Natural killer cell (primary cell): ENCODE measurements at regions of chr9 and their contacts with region 1.

Region 1: GRCh38 chr9:96020792-96021550 is 145.5 kb downstream of the ERCC6L2 start:
- DNase-seq: peak; percentile 64 to 74
- ATAC-seq: peak; percentile 62 to 75 (median 68)
- H3K4me3 ChIP-seq: peak overlapping the region; percentile 56
- H3K4me3 Mint-ChIP-seq: peak overlapping the region; percentile 93
- H3K27ac ChIP-seq: peak overlapping the region; percentile 95
- H3K27ac Mint-ChIP-seq: peak overlapping the region; percentile 91 to 99
- H3K4me1 ChIP-seq: peaks cover 47% of the 10 kb centered on the region
- H3K4me1 Mint-ChIP-seq: peaks cover 76 to 86% of the 10 kb centered on the region in 2 donors
- H3K27me3 ChIP-seq: no peaks in the 10 kb centered on the region
- H3K27me3 Mint-ChIP-seq: no peaks in the 10 kb centered on the region
- CTCF ChIP-seq: no peak

Region 2: DNA sequence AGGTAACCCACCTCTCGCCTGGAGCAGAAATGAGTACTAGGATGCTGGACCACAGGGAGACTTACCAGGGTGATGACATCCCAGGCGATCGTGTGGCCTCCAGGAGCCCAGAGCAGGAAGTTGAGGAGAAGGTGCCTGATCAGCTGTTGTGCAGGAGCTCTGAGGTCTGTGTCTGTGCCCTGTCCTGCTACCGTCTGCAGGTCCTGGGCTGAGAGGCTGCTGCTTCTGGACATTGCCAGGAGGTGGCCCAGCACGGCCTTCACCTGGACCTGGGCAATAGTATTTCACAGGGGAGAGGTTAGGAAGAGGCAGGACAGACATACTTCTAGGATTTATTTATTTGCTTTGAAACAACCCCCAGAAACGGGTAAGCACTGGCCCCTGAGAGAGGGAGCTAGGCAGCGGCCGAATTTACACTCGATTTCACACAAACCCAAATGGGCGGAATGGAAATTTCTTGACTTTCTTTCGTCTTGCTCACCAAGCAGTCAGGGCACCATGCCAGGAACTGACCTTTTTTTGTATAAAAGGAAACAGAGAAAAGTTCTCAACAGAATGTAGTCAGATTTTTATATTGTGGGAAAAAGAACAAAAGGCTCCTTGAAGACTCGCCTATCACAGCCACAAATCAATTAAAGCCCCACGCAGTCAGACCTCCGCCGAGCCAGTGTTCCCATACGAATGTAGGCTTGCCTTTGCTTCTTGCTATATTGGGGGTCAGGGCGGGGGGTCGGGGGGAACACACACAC is 913.8 kb before region 1 on chr9:
- intact Hi-C with region 1: no loop called
- DNase-seq: no peak
- ATAC-seq: no peak
- H3K4me3 ChIP-seq: no peak overlapping the region
- H3K4me3 Mint-ChIP-seq: no peak overlapping the region
- H3K27ac ChIP-seq: no peak overlapping the region
- H3K27ac Mint-ChIP-seq: no peak overlapping the region
- H3K4me1 ChIP-seq: no peaks in the 10 kb centered on the region
- H3K4me1 Mint-ChIP-seq: no peaks in the 10 kb centered on the region
- H3K27me3 ChIP-seq: no peaks in the 10 kb centered on the region
- H3K27me3 Mint-ChIP-seq: no peaks in the 10 kb centered on the region
- CTCF ChIP-seq: no peak

Region 3: GRCh38 chr9:95875305-95876137 is 145.4 kb before region 1 on chr9 and contains the start of gene ERCC6L2:
- intact Hi-C with region 1: loop called (anchors 2 kb)
- DNase-seq: peak; percentile 92 to 97
- ATAC-seq: peak; percentile 85 to 93 (median 89)
- H3K4me3 ChIP-seq: peak within 1 kb of the TSS; percentile 95
- H3K4me3 Mint-ChIP-seq: no peak within 1 kb of the TSS
- H3K27ac ChIP-seq: no peak within 1 kb of the TSS
- H3K27ac Mint-ChIP-seq: no peak within 1 kb of the TSS
- H3K4me1 ChIP-seq: peaks cover 20% of the 10 kb centered on the region
- H3K4me1 Mint-ChIP-seq: peaks cover 9 to 16% of the 10 kb centered on the region in 2 donors
- H3K27me3 ChIP-seq: no peaks in the 10 kb centered on the region
- H3K27me3 Mint-ChIP-seq: no peaks in the 10 kb centered on the region
- CTCF ChIP-seq: no peak
- total RNA-seq, gene ERCC6L2: 37.1 to 45.8 (median 38.6) TPM

Region 4: GRCh38 chr9:95954940-95955339 is 66.0 kb before region 1 on chr9:
- intact Hi-C with region 1: no loop called
- DNase-seq: no peak
- ATAC-seq: no peak
- H3K4me3 ChIP-seq: no peak overlapping the region
- H3K4me3 Mint-ChIP-seq: no peak overlapping the region
- H3K27ac ChIP-seq: no peak overlapping the region
- H3K27ac Mint-ChIP-seq: no peak overlapping the region
- H3K4me1 ChIP-seq: no peaks in the 10 kb centered on the region
- H3K4me1 Mint-ChIP-seq: peaks cover 7 to 25% of the 10 kb centered on the region in 2 donors
- H3K27me3 ChIP-seq: no peaks in the 10 kb centered on the region
- H3K27me3 Mint-ChIP-seq: no peaks in the 10 kb centered on the region
- CTCF ChIP-seq: no peak

Region 5: GRCh38 chr9:95989297-95989696 is 31.7 kb before region 1 on chr9:
- intact Hi-C with region 1: no loop called
- DNase-seq: no peak
- ATAC-seq: no peak
- H3K4me3 ChIP-seq: no peak overlapping the region
- H3K4me3 Mint-ChIP-seq: no peak overlapping the region
- H3K27ac ChIP-seq: no peak overlapping the region
- H3K27ac Mint-ChIP-seq: no peak overlapping the region
- H3K4me1 ChIP-seq: no peaks in the 10 kb centered on the region
- H3K4me1 Mint-ChIP-seq: peaks cover 0 to 5% of the 10 kb centered on the region in 2 donors
- H3K27me3 ChIP-seq: no peaks in the 10 kb centered on the region
- H3K27me3 Mint-ChIP-seq: no peaks in the 10 kb centered on the region
- CTCF ChIP-seq: no peak

Region 6: DNA sequence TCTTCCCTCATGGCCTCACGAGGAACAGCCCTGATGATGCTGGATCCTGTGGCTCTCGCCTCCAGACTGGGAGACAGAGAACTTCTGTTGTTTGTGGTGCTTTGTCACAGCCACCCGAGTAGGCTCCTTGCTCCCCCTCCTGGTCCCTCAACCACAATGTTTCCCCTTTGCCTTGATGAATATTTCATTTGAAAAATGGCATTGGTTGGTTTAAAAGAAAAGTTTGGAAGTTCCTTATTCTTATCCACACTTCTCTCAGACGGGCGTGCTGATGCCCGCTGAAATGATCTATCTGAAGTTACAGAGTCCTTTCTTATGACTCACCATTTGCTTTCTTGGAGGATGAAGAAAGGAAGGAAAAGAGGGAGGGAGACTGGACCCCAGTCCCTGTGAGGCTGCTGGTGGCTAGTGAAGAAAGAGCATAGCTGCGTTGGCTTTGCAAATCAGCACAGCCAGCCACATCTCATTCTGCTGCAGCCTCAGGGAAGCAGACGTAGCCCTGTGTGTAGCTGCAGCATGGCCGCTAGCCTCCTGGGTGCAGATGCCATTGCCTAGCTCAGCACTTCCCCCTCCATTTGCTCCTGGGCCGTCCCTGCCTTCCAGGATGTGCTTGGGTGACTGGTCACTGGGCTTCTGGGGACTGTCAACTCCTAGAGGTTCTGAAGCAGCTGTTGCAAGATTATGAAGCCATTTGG is 40.5 kb after region 1 on chr9:
- intact Hi-C with region 1: loop called (anchors 5 kb)
- DNase-seq: peak; percentile 33 to 64
- ATAC-seq: peak; percentile 38 to 72 (median 43)
- H3K4me3 ChIP-seq: no peak overlapping the region
- H3K4me3 Mint-ChIP-seq: no peak overlapping the region
- H3K27ac ChIP-seq: no peak overlapping the region
- H3K27ac Mint-ChIP-seq: no peak overlapping the region
- H3K4me1 ChIP-seq: peaks cover 9% of the 10 kb centered on the region
- H3K4me1 Mint-ChIP-seq: peaks cover 22 to 27% of the 10 kb centered on the region in 2 donors
- H3K27me3 ChIP-seq: no peaks in the 10 kb centered on the region
- H3K27me3 Mint-ChIP-seq: peaks cover 6 to 12% of the 10 kb centered on the region in 2 donors
- CTCF ChIP-seq: peak; percentile 54

Region 7: GRCh38 chr9:96150324-96151227 is 129.6 kb after region 1 on chr9:
- intact Hi-C with region 1: loop called (anchors 5 kb)
- DNase-seq: peak; percentile 47 to 67
- ATAC-seq: peak; percentile 84 to 90 (median 86)
- H3K4me3 ChIP-seq: no peak overlapping the region
- H3K4me3 Mint-ChIP-seq: peak overlapping the region; percentile 45
- H3K27ac ChIP-seq: no peak overlapping the region
- H3K27ac Mint-ChIP-seq: peak overlapping the region in 1 of 2 donors; percentile 41
- H3K4me1 ChIP-seq: peaks cover 21% of the 10 kb centered on the region
- H3K4me1 Mint-ChIP-seq: peaks cover 15 to 25% of the 10 kb centered on the region in 2 donors
- H3K27me3 ChIP-seq: peaks cover 26% of the 10 kb centered on the region
- H3K27me3 Mint-ChIP-seq: peaks cover 26 to 35% of the 10 kb centered on the region in 2 donors
- CTCF ChIP-seq: no peak